Activated T-helper 2 cell treated with anti-CD3 and anti-CD28 coated beads, Interferon-gamma antibody, Interleukin-2, Interleukin-4, amounts not matched to agents 10 μg/mL and 5 μg/mL and 100 μg/mL, durations not matched to agents 14 hours and 24 hours and 36 hours (primary cell): ENCODE measurements at regions of chr12 and their contacts with region 1.

Region 1: GRCh38 chr12:79935021-79935623 is at the start of gene PPP1R12A:
- DNase-seq: peak; percentile 94
- H3K4me3 Mint-ChIP-seq: peak within 1 kb of the TSS; percentile 92
- H3K27ac Mint-ChIP-seq: peak within 1 kb of the TSS; percentile 91
- H3K4me1 Mint-ChIP-seq: peaks cover 29% of the 10 kb centered on the region
- H3K27me3 Mint-ChIP-seq: no peaks in the 10 kb centered on the region
- total RNA-seq, gene PPP1R12A: 82.4 and 89.8 TPM in 2 replicates

Region 2: GRCh38 chr12:79690638-79691493 is 244.3 kb before region 1 on chr12 and contains the start of gene PAWR:
- intact Hi-C with region 1: loop called (anchors 10 kb)
- DNase-seq: peak; percentile 9
- H3K4me3 Mint-ChIP-seq: peak within 1 kb of the TSS; percentile 75
- H3K27ac Mint-ChIP-seq: no peak within 1 kb of the TSS
- H3K4me1 Mint-ChIP-seq: peaks cover 14% of the 10 kb centered on the region
- H3K27me3 Mint-ChIP-seq: peaks cover 59% of the 10 kb centered on the region
- total RNA-seq, gene PAWR: 2.8 and 4.1 TPM in 2 replicates

Region 3: DNA sequence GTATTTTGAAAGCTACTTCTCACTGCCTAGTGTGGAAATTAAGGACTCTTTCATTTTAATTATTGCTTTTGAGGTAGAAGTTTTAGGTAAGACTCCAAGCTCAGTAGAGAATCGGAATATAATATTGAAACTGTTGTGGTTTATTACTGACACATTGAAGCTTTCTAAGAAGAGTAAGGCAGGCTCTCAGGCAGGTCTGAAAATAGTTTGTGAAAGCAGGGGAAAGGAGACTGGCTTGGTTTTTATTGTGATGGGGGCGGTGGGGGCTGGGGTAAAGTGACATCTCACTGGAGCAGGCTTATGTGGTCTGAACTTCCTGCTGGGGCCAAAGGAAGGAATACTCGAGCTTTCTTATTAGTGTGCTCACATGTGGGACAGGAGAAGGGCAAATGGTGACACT is 243.7 kb after region 1 on chr12:
- intact Hi-C with region 1: loop called (anchors 2 kb)
- DNase-seq: no peak
- H3K4me3 Mint-ChIP-seq: peak overlapping the region; percentile 18
- H3K27ac Mint-ChIP-seq: peak overlapping the region; percentile 44
- H3K4me1 Mint-ChIP-seq: peaks cover 25% of the 10 kb centered on the region
- H3K27me3 Mint-ChIP-seq: no peaks in the 10 kb centered on the region